ENCODE measurements at regions of chr6 and their contacts with region 1.

Region 1: GRCh38 chr6:144284783-144285547 is at the start of gene UTRN:
- DNase-seq: peak; percentile 84 to 85
- ATAC-seq: peak; percentile 78 to 87 (median 85)
- H3K4me3 ChIP-seq: peak within 1 kb of the TSS; percentile 67 to 96 (median 82)
- H3K27ac ChIP-seq: peak within 1 kb of the TSS; percentile 93 to 98 (median 96)
- H3K4me1 ChIP-seq: peaks cover 0 to 24% (median 18%) of the 10 kb centered on the region in 9 donors
- H3K27me3 ChIP-seq: no peaks in the 10 kb centered on the region
- CTCF ChIP-seq: peak in 3 of 9 donors; percentile 8 to 23 (median 10)
- total RNA-seq, gene UTRN: 54.4 to 109 (median 85.5) TPM

Region 2: GRCh38 chr6:144104898-144105487 is 180.0 kb before region 1 on chr6:
- intact Hi-C with region 1: loop called in 3 of 10 experiments (anchors 2 to 10 kb)
- DNase-seq: peak in 1 of 2 donors; percentile 74
- ATAC-seq: peak; percentile 57 to 91 (median 87)
- H3K4me3 ChIP-seq: no peak overlapping the region
- H3K27ac ChIP-seq: no peak overlapping the region
- H3K4me1 ChIP-seq: peaks cover 0 to 6% (median 0%) of the 10 kb centered on the region in 9 donors
- H3K27me3 ChIP-seq: no peaks in the 10 kb centered on the region
- CTCF ChIP-seq: peak; percentile 48 to 87 (median 72)

Region 3: GRCh38 chr6:144215932-144216667 is 68.9 kb before region 1 on chr6:
- intact Hi-C with region 1: loop called in 8 of 10 experiments (anchors 1 to 10 kb)
- DNase-seq: peak; percentile 93 to 96
- ATAC-seq: peak; percentile 93 to 97 (median 95)
- H3K4me3 ChIP-seq: peak overlapping the region; percentile 23 to 73 (median 68)
- H3K27ac ChIP-seq: peak overlapping the region; percentile 87 to 97 (median 94)
- H3K4me1 ChIP-seq: peaks cover 0 to 31% (median 17%) of the 10 kb centered on the region in 9 donors
- H3K27me3 ChIP-seq: no peaks in the 10 kb centered on the region
- CTCF ChIP-seq: peak; percentile 56 to 75 (median 66)

Region 4: GRCh38 chr6:144343701-144344428 is 58.9 kb after region 1 on chr6:
- intact Hi-C with region 1: loop called in 3 of 10 experiments (anchors 5 to 10 kb)
- DNase-seq: peak in 1 of 2 donors; percentile 31
- ATAC-seq: peak; percentile 72 to 93 (median 82)
- H3K4me3 ChIP-seq: peak overlapping the region in 9 of 10 donors; percentile 15 to 51 (median 39)
- H3K27ac ChIP-seq: peak overlapping the region; percentile 22 to 85 (median 72)
- H3K4me1 ChIP-seq: peaks cover 0 to 100% (median 91%) of the 10 kb centered on the region in 9 donors
- H3K27me3 ChIP-seq: no peaks in the 10 kb centered on the region
- CTCF ChIP-seq: no peak

Region 5: GRCh38 chr6:144411332-144412190 is 126.6 kb after region 1 on chr6:
- intact Hi-C with region 1: loop called in 3 of 10 experiments (anchors 5 to 10 kb)
- DNase-seq: no peak
- ATAC-seq: no peak
- H3K4me3 ChIP-seq: no peak overlapping the region
- H3K27ac ChIP-seq: no peak overlapping the region
- H3K4me1 ChIP-seq: peaks cover 3 to 83% (median 46%) of the 10 kb centered on the region in 9 donors
- H3K27me3 ChIP-seq: no peaks in the 10 kb centered on the region
- CTCF ChIP-seq: no peak

Region 6: DNA sequence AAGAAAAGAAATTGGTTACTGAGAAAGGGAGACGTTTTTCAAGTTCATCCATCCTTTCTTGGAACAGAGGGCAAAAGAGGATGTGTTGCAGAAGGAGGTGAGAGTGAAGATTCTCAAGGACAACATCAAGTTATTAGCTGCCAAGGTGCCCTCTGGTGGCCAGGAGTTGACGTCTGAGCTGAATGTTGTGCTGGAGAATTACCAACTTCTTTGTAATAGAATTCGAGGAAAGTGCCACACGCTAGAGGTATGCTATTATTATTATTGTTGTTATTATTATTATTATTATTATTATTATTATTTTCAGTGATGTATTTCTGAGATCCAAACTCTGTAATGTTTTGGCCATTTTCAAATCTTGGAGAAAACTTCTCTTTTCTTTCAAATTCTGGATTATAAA is 197.2 kb after region 1 on chr6:
- intact Hi-C with region 1: loop called in 5 of 10 experiments (anchors 2 to 10 kb)
- DNase-seq: peak; percentile 67 to 72
- ATAC-seq: peak in 3 of 8 donors; percentile 42 to 58 (median 56)
- H3K4me3 ChIP-seq: no peak overlapping the region
- H3K27ac ChIP-seq: peak overlapping the region in 2 of 10 donors; percentile 1 to 10
- H3K4me1 ChIP-seq: peaks cover 0 to 39% (median 22%) of the 10 kb centered on the region in 9 donors
- H3K27me3 ChIP-seq: no peaks in the 10 kb centered on the region
- CTCF ChIP-seq: peak in 8 of 9 donors; percentile 30 to 82 (median 74)

Measured in heart right ventricle (tissue), 16 donors.